ENCODE measurements at regions of chr6 and their contacts with region 1.

Region 1: DNA sequence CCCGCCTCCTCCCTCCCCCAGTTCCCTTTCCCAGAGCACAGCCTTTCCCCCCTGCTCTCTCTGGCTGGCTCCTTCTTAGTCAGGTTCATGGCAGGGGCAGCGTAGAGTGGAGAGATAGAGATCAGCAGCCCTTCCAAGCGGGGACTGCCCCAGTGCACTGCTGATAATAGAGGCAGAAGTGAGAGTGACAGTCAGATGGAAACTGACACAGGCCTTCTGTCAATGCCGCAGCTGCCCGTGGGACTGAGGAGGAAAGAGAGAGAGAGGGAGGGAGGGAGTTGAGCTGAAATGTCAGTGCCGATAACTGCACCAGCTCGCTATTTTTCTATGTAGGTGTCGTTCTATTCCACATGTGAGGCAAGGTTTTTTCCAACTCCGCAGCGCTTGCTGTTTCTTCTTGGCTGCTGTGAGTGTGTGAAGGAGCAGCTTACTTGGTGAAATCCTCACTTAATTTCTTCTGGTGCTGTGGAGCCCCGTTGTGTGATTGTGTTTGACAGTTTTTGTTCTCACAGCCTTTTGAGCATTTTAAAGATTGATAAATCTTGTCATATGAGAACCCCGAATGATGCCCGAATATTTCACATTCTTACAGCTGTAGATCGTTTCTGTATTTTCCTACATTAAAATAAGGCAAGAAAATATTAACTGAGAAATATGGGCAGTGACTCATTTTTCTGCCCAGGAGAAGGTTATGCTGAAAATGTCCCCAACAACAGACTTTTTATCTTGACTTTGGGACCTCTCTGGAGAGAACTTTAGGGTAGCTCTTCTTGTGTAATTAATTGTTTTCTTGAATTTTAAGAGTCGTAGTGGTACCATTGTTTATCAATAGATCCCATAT is 386.4 kb upstream of the MMS22L start:
- DNase-seq: peak; percentile 23 to 27
- ATAC-seq: peak; percentile 32 to 99 (median 82)
- H3K4me3 ChIP-seq: peak overlapping the region in 8 of 10 donors; percentile 7 to 45 (median 32)
- H3K27ac ChIP-seq: peak overlapping the region in 5 of 10 donors; percentile 16 to 64 (median 36)
- H3K4me1 ChIP-seq: peaks cover 0 to 13% (median 0%) of the 10 kb centered on the region in 9 donors
- H3K27me3 ChIP-seq: no peaks in the 10 kb centered on the region
- CTCF ChIP-seq: no peak

Region 2: GRCh38 chr6:97305414-97306066 is 363.9 kb before region 1 on chr6:
- intact Hi-C with region 1: no loop called
- DNase-seq: no peak
- ATAC-seq: no peak
- H3K4me3 ChIP-seq: no peak overlapping the region
- H3K27ac ChIP-seq: no peak overlapping the region
- H3K4me1 ChIP-seq: no peaks in the 10 kb centered on the region
- H3K27me3 ChIP-seq: peaks cover 0 to 5% (median 0%) of the 10 kb centered on the region in 7 donors
- CTCF ChIP-seq: no peak

Region 3: DNA sequence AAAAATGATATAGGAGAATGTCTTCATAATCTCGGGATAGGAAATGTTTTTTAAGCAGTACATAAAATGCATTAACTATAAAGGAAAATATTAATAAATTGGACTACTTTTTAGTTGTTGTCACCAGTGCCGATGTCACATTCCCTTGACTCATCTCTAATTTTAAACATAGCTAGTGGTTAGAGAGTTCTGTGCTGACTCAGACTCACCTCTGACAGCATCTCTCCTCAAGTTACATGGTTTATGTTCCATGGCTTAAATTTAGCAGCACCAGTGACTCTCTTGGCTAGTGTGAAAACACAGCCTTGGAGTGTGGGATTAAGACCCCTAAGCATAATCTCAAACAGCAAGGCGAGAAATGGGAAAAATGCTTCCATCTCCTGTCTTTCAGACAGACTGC is 74.6 kb before region 1 on chr6:
- intact Hi-C with region 1: loop called in 1 of 10 experiments (anchors 5 kb)
- DNase-seq: peak in 1 of 2 donors; percentile 52
- ATAC-seq: peak; percentile 77 to 99 (median 93)
- H3K4me3 ChIP-seq: no peak overlapping the region
- H3K27ac ChIP-seq: peak overlapping the region in 5 of 10 donors; percentile 45 to 69 (median 60)
- H3K4me1 ChIP-seq: peaks cover 0 to 5% (median 0%) of the 10 kb centered on the region in 9 donors
- H3K27me3 ChIP-seq: no peaks in the 10 kb centered on the region
- CTCF ChIP-seq: no peak

Measured in heart right ventricle (tissue), 16 donors.